ENCODE measurements at regions of chr19 and their contacts with region 1.

Region 1: GRCh38 chr19:13195678-13196077 is 45.5 kb downstream of the IER2 start:
- DNase-seq: no peak
- H3K4me3 ChIP-seq: no peak overlapping the region
- H3K27me3 ChIP-seq: no peaks in the 10 kb centered on the region
- CTCF ChIP-seq: no peak

Region 2: DNA sequence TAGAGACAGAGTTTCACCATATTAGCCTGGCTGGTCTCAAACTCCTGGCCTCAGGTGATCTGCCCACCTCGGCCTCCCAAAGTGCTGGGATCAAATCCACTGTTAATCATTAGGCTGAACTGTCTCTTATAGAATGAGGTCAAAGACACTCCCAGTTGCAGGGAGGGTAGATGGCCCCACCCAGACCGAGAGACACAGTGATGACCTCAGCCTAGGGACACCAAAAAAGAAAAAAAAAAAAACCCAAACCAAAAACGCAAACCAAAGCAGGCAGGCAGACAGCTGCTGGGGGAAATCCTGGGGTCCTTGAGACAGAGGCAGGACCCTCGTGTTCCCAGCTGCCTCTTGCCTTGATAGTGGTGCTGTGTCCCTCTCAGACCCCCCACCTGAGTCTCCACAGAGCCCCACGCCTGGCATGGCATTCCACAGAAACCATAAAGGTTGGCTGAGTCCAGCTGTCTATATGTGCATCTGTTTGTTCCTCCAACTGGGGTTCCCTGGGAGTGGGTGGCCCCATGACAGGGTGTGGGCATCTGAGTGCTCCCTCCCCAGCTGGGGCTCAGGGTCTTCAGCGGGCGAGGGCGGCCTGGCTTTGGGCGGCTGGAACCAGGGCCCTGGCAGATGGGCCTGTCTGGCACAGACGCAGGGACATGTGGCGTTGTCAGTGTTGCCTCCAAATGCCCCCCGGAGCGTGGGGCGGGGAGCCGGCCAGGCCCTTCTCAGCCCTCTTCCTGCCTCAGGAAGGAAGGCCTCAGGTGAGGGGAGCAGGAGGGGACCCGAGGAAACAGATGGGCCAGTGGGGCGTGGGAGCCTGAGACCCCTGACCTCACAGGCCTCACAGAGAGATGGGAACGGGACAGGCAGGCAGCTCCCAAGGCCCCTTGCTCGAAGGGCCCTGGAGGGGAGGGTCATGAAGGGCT is 221.1 kb before region 1 on chr19:
- CTCF ChIA-PET with region 1: no interaction called
- POLR2A ChIA-PET with region 1: interaction called, 14 read pairs
- DNase-seq: no peak
- H3K4me3 ChIP-seq: no peak overlapping the region
- H3K27me3 ChIP-seq: no peaks in the 10 kb centered on the region
- CTCF ChIP-seq: no peak

Region 3: DNA sequence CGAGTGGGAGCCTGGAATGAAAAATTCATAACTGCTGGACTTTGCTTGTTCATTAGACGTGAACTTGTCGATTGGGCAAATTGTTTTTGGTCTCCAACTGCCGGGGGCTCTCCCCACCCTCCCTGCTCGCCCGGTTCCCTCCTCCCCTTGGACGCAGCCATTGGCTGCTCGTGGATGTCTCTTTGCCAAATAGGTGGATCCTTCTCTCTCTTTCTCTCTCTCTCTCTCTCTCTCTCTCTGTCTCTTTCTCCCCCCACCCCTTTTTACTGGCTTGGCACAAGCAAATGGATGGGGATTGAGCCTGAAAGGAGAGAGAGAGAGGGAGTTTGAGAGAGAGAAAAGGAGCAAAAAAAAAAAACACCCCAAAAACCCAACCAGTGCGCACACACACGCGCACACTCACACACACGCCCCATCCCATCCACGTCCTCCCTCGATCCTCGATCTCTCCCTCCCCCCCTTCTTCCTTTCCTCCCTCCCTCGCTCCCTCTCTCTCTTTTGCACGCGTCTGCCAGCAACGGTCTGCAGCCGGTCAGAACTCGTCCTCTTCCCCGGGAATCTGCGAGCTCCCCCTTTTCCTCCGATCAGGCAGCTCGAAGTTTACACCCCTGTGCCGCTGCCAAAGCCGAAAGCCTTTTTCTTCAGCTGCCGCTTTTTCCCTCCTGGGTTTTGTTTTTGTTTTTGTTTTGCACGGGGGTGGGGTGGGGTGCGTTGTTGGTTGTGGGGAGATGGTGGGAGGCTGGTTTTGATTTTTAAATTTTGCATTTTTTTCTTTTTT is 172.6 kb before region 1 on chr19:
- CTCF ChIA-PET with region 1: no interaction called
- POLR2A ChIA-PET with region 1: no interaction called
- DNase-seq: peak; percentile 89
- H3K4me3 ChIP-seq: peak overlapping the region; percentile 43
- H3K27me3 ChIP-seq: no peaks in the 10 kb centered on the region
- CTCF ChIP-seq: no peak

Region 4: GRCh38 chr19:13117772-13118423 is 77.8 kb before region 1 on chr19 and contains the start of gene NACC1:
- CTCF ChIA-PET with region 1: no interaction called
- POLR2A ChIA-PET with region 1: no interaction called
- DNase-seq: no peak
- H3K4me3 ChIP-seq: peak within 1 kb of the TSS; percentile 99
- H3K27me3 ChIP-seq: no peaks in the 10 kb centered on the region
- CTCF ChIP-seq: no peak
- polyA plus RNA-seq, gene NACC1: 46.8 and 98.7 TPM in 2 replicates

Region 5: DNA sequence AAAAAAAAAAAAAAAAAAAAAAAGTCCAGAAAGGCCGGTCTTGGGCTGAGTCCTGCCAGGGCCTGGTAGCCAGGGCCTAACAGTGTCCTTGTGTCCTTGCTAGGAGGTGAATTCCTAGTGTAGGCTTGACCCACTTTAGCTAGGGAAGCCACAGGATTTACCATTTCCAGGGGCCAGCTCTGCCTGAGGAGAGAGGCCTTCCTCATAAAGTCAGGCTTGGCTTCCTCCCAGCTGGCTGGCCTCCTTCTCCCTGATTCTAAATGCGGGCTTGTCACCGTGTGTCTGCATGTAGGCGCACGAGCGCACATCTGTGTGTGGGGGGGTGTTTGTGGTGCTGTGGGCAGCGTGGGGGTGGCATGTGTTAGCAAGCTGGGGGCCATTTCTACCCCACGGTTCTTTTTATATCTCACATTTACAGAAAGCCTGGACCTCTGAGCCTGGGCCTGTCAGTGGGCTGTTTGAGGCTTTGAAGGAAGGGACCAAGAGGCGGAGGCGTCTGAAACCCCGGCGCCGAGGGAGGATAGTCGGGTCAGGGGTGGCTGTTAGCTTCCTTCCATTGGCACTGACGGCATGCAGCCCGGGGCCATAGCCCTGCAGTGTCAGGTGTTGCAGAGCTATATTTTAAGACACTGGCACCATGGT is 13.8 kb before region 1 on chr19:
- CTCF ChIA-PET with region 1: interaction called, 14 read pairs
- POLR2A ChIA-PET with region 1: no interaction called
- DNase-seq: peak; percentile 55
- H3K4me3 ChIP-seq: no peak overlapping the region
- H3K27me3 ChIP-seq: no peaks in the 10 kb centered on the region
- CTCF ChIP-seq: no peak

Region 6: DNA sequence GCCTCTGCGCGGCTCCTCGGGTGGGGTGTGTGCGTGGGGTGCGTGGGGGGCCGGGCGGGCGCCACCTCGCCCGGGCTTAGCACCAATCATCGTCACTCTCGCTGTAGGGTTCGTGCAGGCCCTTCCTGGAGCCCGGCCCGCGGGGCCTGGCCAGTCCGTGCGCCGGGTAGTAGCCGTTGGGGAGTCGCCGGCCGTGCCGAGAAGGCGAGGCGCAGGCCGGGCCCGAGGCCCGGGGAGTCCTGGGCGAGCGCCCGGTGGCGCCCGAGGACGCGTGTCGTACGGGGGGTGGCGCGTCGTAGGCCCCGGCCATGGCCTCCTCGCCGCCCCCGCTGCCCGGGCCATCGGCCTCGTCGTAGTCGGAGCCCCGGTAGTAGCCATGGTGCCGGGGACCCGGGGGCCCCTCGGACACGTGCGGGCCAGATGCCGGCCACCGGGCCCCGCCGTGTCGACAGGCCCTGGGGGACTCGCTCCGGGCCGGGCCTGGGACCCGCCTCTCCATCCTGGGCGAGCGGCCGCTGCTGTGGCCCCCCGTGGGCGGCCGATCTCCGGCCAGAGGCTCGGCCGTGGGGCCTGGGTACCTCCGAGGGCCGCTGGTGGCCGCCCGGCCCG is 11.7 kb after region 1 on chr19:
- CTCF ChIA-PET with region 1: interaction called, 13 read pairs
- POLR2A ChIA-PET with region 1: no interaction called
- DNase-seq: no peak
- H3K4me3 ChIP-seq: peak overlapping the region; percentile 21
- H3K27me3 ChIP-seq: no peaks in the 10 kb centered on the region
- CTCF ChIP-seq: no peak

Region 7: DNA sequence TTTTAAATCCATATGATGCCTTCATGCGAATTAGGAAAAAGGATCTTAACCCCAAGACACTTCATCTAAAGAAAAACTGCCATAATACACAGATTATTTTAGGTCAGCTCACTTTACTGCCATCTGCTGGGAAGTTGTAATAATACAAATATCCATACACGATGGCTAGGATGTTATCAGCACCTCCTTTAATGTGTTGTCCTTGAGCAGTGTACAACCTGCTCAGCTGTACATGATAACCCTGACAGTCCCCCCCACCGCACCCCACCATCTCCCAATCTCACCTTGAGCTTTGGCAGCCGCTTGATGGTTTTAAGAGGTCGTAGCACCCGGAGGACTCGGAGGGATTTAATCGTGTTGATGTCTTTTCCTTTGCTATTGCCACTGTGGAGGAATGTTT is 66.8 kb after region 1 on chr19:
- CTCF ChIA-PET with region 1: interaction called, 57 read pairs
- POLR2A ChIA-PET with region 1: no interaction called
- DNase-seq: peak; percentile 6
- H3K4me3 ChIP-seq: no peak overlapping the region
- H3K27me3 ChIP-seq: no peaks in the 10 kb centered on the region
- CTCF ChIP-seq: peak; percentile 52

Region 8: GRCh38 chr19:13398780-13399726 is 203.4 kb after region 1 on chr19:
- CTCF ChIA-PET with region 1: no interaction called
- POLR2A ChIA-PET with region 1: interaction called, 14 read pairs
- DNase-seq: peak; percentile 67
- H3K4me3 ChIP-seq: no peak overlapping the region
- H3K27me3 ChIP-seq: no peaks in the 10 kb centered on the region
- CTCF ChIP-seq: no peak